T-cell (primary cell): ENCODE measurements at regions of chr12 and their contacts with region 1.

Region 1: GRCh38 chr12:47843226-47843990 is 23.7 kb upstream of the HDAC7 start:
- DNase-seq: no peak
- ATAC-seq: no peak
- H3K4me3 ChIP-seq: no peak overlapping the region
- H3K4me3 Mint-ChIP-seq: no peak overlapping the region
- H3K27ac ChIP-seq: no peak overlapping the region
- H3K27ac Mint-ChIP-seq: no peak overlapping the region
- H3K4me1 ChIP-seq: no peaks in the 10 kb centered on the region
- H3K4me1 Mint-ChIP-seq: peaks cover 0 to 3% (median under 1%) of the 10 kb centered on the region in 3 donors
- H3K27me3 ChIP-seq: peaks cover 0 to 13% of the 10 kb centered on the region in 2 experiments
- H3K27me3 Mint-ChIP-seq: no peaks in the 10 kb centered on the region

Region 2: DNA sequence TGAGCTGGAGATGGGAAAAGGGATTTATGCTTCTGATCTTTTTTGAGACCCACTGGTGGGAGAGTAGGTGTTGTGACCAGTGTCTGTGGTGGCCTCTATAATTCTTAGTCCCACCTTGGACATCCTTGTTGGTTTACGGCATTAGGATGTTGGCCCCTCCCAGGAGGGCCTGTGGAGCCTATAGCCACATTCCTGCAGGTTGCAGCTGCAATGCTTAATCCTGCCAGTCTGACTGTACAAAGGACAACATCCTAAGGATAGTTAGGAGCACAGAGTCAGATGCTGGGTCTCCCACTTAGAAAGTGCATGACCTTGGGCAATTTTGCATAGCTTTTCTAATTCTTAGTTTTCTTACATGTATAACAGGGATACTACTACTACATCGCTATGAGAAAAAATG is 1320.0 kb before region 1 on chr12:
- CTCF ChIA-PET with region 1: no interaction called
- POLR2A ChIA-PET with region 1: interaction called in 1 of 2 experiments, 13 read pairs
- DNase-seq: no peak
- ATAC-seq: peak in 1 of 4 experiments; percentile 14
- H3K4me3 ChIP-seq: peak overlapping the region in 1 of 2 donors; percentile 5
- H3K4me3 Mint-ChIP-seq: peak overlapping the region; percentile 57 to 60 (median 58)
- H3K27ac ChIP-seq: peak overlapping the region; percentile 68
- H3K27ac Mint-ChIP-seq: peak overlapping the region; percentile 89 to 90
- H3K4me1 ChIP-seq: peaks cover 22 to 28% of the 10 kb centered on the region in 2 experiments
- H3K4me1 Mint-ChIP-seq: peaks cover 37 to 49% (median 46%) of the 10 kb centered on the region in 3 donors
- H3K27me3 ChIP-seq: no peaks in the 10 kb centered on the region
- H3K27me3 Mint-ChIP-seq: no peaks in the 10 kb centered on the region

Region 3: GRCh38 chr12:46915082-46915481 is 928.3 kb before region 1 on chr12:
- CTCF ChIA-PET with region 1: no interaction called
- POLR2A ChIA-PET with region 1: no interaction called
- DNase-seq: no peak
- ATAC-seq: no peak
- H3K4me3 ChIP-seq: no peak overlapping the region
- H3K4me3 Mint-ChIP-seq: no peak overlapping the region
- H3K27ac ChIP-seq: no peak overlapping the region
- H3K27ac Mint-ChIP-seq: no peak overlapping the region
- H3K4me1 ChIP-seq: no peaks in the 10 kb centered on the region
- H3K4me1 Mint-ChIP-seq: no peaks in the 10 kb centered on the region
- H3K27me3 ChIP-seq: peaks cover 0 to 4% of the 10 kb centered on the region in 2 experiments
- H3K27me3 Mint-ChIP-seq: peaks cover 12 to 13% of the 10 kb centered on the region in 2 donors